AG04449 (cell line): ENCODE measurements at regions of chr16 and their contacts with region 1.

Region 1: DNA sequence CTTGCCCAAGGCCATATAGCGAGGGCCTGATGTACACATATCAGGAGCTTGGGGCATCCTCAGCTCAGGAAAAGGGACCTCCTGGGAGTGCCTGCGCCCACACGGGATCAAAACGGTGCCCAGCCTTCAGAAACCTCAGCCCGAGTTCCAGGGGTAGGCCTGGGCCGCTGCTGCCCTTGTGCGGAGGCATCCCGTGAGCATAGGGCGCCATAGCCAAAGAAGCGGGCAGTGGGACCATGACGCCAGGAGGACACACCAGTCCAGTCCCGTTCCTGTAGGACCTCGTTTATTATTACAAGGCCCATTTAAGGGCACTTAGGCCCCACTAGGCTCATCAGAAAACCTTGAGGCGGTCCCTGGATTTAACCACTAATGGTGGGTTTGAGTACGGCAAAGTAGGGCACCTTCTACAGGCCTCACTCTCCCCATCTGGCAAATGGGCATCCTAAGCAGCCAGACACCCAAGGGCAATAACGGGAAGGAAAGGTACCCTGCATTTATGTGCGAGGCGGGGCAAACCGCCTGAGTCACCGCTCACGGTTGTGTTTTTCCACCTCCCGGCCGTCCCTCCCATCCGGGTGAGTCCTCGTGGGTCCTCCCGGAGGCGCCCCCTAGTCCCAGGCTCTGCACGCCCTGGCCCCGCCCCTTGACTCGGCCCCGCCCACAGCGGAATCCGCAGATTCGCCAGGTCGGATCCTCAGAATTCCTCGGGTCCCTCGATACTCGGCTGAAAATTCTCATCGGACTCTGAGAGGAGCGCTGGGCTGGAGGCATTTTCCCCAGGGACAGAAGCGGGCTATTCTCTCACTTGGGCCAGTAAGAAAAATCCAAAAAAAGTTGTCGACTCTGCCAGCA is 726 bp upstream of the SETD1A start:
- DNase-seq: no peak
- H3K4me3 ChIP-seq: peak overlapping the region; percentile 84
- CTCF ChIP-seq: peak; percentile 53

Region 2: DNA sequence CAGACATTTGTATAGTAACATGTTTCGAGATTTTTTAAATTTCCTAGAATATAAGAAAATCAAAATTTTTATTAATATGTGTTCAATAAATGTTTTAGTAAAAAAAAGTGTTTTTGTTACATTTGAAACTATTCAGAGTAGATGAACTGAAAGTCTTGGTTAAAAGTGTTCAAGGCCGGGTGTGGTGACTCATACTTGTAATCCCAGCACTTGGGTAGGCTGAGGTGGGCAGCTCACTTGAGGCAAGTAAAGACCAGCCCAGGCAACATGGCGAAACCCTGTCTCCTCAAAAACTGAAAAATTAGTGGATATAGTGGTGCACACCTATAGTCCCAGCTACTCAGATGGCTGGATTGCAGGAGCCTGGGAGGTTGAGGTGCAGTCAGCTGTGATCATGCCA is 225.4 kb before region 1 on chr16:
- CTCF ChIA-PET with region 1: no interaction called
- POLR2A ChIA-PET with region 1: no interaction called
- DNase-seq: no peak
- H3K4me3 ChIP-seq: no peak overlapping the region
- CTCF ChIP-seq: no peak

Region 3: DNA sequence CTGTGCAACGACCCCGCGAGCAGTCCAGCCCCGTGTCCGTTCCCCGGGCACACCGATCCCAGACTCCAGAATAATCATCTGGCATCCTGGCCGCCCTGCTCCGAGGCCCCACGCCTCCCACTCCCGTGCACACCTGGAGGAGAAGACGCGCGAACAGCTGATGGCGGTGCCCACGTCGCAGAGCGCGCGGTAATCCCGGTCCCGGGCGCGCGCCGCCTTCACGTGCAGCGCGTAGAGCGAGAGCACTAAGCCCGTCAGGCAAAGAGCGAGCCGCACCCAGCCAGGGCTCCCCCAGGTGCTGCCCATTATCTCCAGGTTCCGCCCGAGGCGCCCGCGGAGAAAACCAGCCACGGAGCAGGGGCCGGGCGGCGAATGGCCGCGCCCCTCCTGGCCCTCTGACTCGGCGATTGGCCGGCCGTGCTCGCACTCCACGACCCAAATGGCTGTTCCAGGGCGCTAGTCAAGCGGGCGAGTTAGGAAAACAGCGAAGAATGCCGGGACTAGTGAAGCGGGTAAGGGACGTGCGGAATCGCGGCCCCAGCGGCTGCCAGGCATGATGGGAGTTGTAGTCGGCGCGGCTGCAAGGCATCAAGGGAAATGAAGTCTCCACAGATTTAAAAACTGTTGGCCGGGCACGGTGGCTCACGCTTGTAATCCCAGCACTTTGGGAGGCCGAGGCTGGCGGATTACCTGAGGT is 137.7 kb after region 1 on chr16 and contains the start of gene VKORC1:
- CTCF ChIA-PET with region 1: interaction called, 59 read pairs
- POLR2A ChIA-PET with region 1: no interaction called
- DNase-seq: peak; percentile 78
- H3K4me3 ChIP-seq: peak within 1 kb of the TSS; percentile 95
- CTCF ChIP-seq: no peak

Region 4: DNA sequence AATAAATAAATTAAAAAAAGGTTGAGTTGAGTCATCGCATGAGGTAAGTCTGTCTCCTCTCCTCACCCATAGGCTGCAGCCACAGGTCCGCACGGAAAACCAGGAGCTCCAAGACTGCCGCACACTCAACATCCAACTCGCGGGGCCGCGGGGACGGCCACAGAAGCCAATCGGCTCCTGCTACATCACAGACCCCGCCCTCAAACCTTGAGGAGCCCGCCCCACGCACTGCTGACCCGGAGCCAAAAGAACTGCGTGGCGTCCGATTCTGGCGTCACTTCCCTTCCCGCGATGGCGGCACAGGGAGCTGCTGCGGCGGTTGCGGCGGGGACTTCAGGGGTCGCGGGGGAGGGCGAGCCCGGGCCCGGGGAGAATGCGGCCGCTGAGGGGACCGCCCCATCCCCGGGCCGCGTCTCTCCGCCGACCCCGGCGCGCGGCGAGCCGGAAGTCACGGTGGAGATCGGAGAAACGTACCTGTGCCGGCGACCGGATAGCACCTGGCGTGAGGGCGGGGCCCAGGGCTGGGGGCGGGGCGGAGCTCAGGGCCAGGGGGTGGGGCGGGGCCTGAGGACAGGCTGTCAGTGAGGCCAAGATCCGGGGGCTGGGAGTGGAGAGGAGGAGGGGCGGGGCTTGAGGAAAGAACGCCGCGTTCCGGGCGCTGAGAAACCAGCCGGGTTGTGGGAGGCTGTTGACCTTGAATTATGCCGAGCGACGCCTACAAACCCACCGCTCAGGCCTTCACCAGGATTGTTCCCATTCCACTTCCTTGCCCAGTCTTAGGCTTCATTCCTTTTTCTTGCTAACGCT is 160.8 kb after region 1 on chr16 and contains the start of gene KAT8:
- CTCF ChIA-PET with region 1: interaction called, 11 read pairs
- POLR2A ChIA-PET with region 1: no interaction called
- DNase-seq: peak; percentile 81
- H3K4me3 ChIP-seq: peak within 1 kb of the TSS; percentile 60
- CTCF ChIP-seq: no peak

Region 5: DNA sequence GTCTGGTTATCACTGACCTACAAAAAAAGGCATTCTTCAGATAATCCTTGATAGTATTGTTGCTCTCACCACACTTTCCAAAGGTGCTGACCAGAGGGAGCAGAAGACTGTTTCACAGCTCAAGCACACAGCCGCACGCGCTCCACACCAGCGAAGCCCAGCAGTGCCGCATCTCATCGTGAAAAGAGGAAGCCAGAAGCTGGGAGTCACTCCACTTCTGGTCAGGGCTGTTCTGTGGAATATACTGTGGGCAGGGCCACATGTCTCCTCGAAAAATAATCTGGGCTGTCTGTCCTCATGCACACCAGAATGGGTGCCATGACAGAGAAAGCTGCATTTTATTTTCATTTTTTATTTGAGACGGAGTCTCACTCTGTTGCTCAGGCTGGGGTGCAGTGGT is 200.3 kb after region 1 on chr16:
- CTCF ChIA-PET with region 1: interaction called, 22 read pairs
- POLR2A ChIA-PET with region 1: no interaction called
- DNase-seq: no peak
- H3K4me3 ChIP-seq: no peak overlapping the region
- CTCF ChIP-seq: no peak

Region 6: DNA sequence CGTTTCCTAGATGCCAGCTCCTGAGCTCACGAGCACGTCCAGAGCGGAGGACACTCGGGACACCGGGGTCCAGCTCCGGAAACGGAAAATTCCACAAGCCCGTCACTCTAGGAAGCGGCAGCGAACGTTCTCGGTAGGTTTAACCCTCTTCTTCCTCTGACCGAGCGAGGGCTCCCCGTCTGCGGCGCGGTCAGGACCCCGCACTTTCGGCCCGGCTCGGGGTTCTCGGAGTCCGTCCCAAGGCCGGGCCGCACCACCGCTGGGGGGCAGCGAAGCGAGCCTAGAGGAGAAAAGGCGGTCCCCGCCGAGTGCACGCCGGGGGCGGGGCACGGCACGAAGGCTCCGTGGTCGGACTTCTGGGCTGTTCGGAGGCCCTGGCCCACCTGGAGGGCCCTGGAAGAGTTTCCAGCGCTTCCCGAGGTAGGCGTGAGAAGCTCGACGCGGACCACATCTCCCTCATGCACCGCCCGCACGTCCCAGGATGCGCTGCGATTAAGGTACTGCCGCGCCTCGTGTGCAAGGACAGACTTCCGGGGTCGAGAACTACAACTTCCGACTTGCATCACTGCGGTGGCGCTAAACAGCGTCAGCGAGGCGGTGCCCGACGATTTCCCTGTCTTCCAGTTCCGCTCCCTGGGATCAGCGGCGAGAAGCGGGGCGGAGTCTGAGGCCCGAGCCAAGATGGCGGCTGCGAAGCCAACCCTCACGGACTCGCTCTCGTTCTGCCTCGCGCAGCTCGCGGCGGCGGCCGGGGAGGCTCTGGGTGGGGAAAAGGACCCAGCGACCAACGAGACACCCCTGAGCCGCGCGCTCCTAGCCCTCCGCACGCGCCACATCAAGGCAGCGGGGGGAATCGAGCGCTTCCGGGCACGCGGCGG is 502.3 kb after region 1 on chr16 and contains the start of gene ARMC5:
- CTCF ChIA-PET with region 1: interaction called, 18 read pairs
- POLR2A ChIA-PET with region 1: no interaction called
- DNase-seq: peak; percentile 90
- H3K4me3 ChIP-seq: peak within 1 kb of the TSS; percentile 64
- CTCF ChIP-seq: peak; percentile 79

Region 7: GRCh38 chr16:31873556-31874365 is 916.9 kb after region 1 on chr16 and contains the start of gene ZNF267:
- CTCF ChIA-PET with region 1: interaction called, 25 read pairs
- POLR2A ChIA-PET with region 1: no interaction called
- DNase-seq: peak; percentile 40
- H3K4me3 ChIP-seq: peak within 1 kb of the TSS; percentile 97
- CTCF ChIP-seq: no peak